Heart left ventricle (tissue), 16 donors: ENCODE measurements at regions of chr1 and their contacts with region 1.

Region 1: GRCh38 chr1:111222308-111223125 is 5.0 kb upstream of the CHI3L2 start:
- DNase-seq: peak; percentile 68 to 87 (median 76)
- ATAC-seq: peak; percentile 65 to 89 (median 82)
- H3K4me3 ChIP-seq: no peak overlapping the region
- H3K27ac ChIP-seq: peak overlapping the region in 1 of 12 donors; percentile 75
- H3K4me1 ChIP-seq: peaks cover 0 to 74% (median 1%) of the 10 kb centered on the region in 12 donors
- H3K27me3 ChIP-seq: no peaks in the 10 kb centered on the region
- CTCF ChIP-seq: peak; percentile 77 to 96 (median 86)
- POLR2A ChIP-seq: no peak

Region 2: GRCh38 chr1:111281411-111281810 is 58.9 kb after region 1 on chr1:
- intact Hi-C with region 1: no loop called
- DNase-seq: no peak
- ATAC-seq: no peak
- H3K4me3 ChIP-seq: no peak overlapping the region
- H3K27ac ChIP-seq: no peak overlapping the region
- H3K4me1 ChIP-seq: no peaks in the 10 kb centered on the region
- H3K27me3 ChIP-seq: peaks cover 0 to 8% (median 0%) of the 10 kb centered on the region in 9 donors
- CTCF ChIP-seq: no peak
- POLR2A ChIP-seq: no peak

Region 3: GRCh38 chr1:111334169-111334568 is 111.7 kb after region 1 on chr1:
- intact Hi-C with region 1: loop called (anchors 1 to 10 kb)
- DNase-seq: peak in 1 of 5 donors; percentile 32
- ATAC-seq: peak in 3 of 4 donors; percentile 55 to 66 (median 58)
- H3K4me3 ChIP-seq: no peak overlapping the region
- H3K27ac ChIP-seq: no peak overlapping the region
- H3K4me1 ChIP-seq: no peaks in the 10 kb centered on the region
- H3K27me3 ChIP-seq: no peaks in the 10 kb centered on the region
- CTCF ChIP-seq: peak in 11 of 12 donors; percentile 25 to 52 (median 38)
- POLR2A ChIP-seq: no peak

Region 4: DNA sequence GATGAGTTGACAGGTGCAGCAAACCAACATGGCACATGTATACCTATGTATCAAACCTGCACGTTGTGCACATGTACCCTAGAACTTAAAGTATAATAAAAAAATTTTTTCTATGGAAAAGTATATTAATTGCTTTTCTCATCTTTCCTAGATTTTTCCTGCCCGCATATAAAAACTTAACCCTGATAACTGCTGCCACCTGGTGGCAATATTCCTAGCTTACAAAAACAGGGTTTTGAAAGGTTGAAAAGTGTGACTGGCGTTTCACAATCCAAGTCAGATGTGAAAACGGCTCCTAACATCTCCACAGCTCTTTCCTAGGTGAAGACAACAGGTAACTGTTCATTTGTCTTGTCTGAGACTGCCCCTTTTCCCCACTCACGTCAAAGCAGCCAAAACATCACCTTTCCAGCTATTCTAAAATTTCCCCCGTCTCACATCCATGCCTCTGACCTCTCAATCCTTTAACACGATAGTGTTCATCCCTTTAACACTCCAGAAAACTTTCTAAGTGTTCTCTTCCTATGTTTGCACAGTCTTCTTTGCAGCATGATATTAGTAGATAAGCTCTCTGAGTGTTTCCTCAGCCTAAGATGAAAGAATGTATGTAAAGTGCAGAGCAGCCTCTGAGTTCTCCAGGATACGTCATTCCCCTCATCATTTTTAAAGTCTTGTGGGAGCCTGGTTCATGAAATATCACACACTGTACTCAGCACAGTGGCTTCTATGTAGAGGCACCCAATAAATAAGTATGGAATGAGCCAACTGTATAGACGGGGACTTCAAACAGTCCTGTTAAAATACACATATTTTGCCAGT is 177.5 kb after region 1 on chr1:
- intact Hi-C with region 1: loop called (anchors 1 to 5 kb)
- DNase-seq: peak in 3 of 5 donors; percentile 26 to 32 (median 29)
- ATAC-seq: no peak
- H3K4me3 ChIP-seq: no peak overlapping the region
- H3K27ac ChIP-seq: no peak overlapping the region
- H3K4me1 ChIP-seq: no peaks in the 10 kb centered on the region
- H3K27me3 ChIP-seq: peaks cover 0 to 3% (median 0%) of the 10 kb centered on the region in 9 donors
- CTCF ChIP-seq: peak; percentile 53 to 82 (median 69)
- POLR2A ChIP-seq: no peak

Region 5: GRCh38 chr1:111656086-111657017 is 433.8 kb after region 1 on chr1:
- intact Hi-C with region 1: loop called in 1 of 10 experiments (anchors 10 kb)
- DNase-seq: no peak
- ATAC-seq: peak; percentile 19 to 73 (median 56)
- H3K4me3 ChIP-seq: no peak overlapping the region
- H3K27ac ChIP-seq: peak overlapping the region in 2 of 12 donors; percentile 3 to 40
- H3K4me1 ChIP-seq: peaks cover 0 to 67% (median 25%) of the 10 kb centered on the region in 12 donors
- H3K27me3 ChIP-seq: no peaks in the 10 kb centered on the region
- CTCF ChIP-seq: peak; percentile 42 to 82 (median 68)
- POLR2A ChIP-seq: no peak

Region 6: DNA sequence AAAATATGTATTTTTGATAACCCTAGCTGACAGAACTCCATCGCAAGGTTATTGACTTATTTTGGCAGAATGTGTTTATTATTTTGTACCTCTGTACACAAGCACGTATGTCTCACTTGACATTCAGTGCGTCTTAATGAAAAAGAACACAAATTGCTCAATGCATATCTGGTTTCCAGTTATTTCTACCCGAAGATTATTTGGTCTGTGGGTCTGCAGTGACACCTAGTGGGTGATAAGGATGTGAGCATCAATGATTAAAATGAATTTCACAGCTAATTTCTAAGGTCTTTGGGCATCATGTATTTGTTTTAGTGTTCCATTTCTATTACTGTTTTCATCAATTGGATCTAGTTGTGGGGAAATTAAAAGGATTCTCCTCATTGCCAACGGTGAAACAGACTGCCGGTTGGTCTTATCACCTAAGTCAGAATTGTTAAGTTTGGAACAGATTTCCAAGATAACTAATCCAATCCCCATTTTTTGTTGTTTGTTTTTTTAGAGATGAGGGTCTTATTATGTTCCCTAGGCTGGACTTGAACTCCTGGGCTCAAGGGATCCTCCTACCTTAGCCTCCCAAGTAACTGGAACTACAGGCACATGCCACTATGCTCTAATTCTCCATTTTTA is 547.1 kb after region 1 on chr1:
- intact Hi-C with region 1: loop called in 5 of 10 experiments (anchors 5 to 10 kb)
- DNase-seq: peak in 1 of 5 donors; percentile 31
- ATAC-seq: peak in 3 of 4 donors; percentile 41 to 48 (median 42)
- H3K4me3 ChIP-seq: no peak overlapping the region
- H3K27ac ChIP-seq: no peak overlapping the region
- H3K4me1 ChIP-seq: peaks cover 0 to 3% (median 0%) of the 10 kb centered on the region in 12 donors
- H3K27me3 ChIP-seq: no peaks in the 10 kb centered on the region
- CTCF ChIP-seq: peak; percentile 71 to 89 (median 79)
- POLR2A ChIP-seq: no peak